Uterus (tissue), 4 donors: ENCODE measurements at regions of chr20 and their contacts with region 1.

Region 1: GRCh38 chr20:62500237-62500864 is 24.6 kb upstream of the GATA5 start:
- DNase-seq: peak; percentile 72 to 78
- H3K4me3 ChIP-seq: no peak overlapping the region
- H3K27ac ChIP-seq: no peak overlapping the region
- H3K4me1 ChIP-seq: no peaks in the 10 kb centered on the region
- H3K27me3 ChIP-seq: no peaks in the 10 kb centered on the region
- CTCF ChIP-seq: peak; percentile 85 to 94 (median 93)
- POLR2A ChIP-seq: no peak

Region 2: GRCh38 chr20:62616728-62617621 is 116.6 kb after region 1 on chr20:
- intact Hi-C with region 1: loop called (anchors 10 kb)
- DNase-seq: peak; percentile 63 to 64
- H3K4me3 ChIP-seq: no peak overlapping the region
- H3K27ac ChIP-seq: peak overlapping the region; percentile 34 to 71
- H3K4me1 ChIP-seq: no peaks in the 10 kb centered on the region
- H3K27me3 ChIP-seq: no peaks in the 10 kb centered on the region
- CTCF ChIP-seq: peak; percentile 92 to 95 (median 94)
- POLR2A ChIP-seq: no peak

Region 3: DNA sequence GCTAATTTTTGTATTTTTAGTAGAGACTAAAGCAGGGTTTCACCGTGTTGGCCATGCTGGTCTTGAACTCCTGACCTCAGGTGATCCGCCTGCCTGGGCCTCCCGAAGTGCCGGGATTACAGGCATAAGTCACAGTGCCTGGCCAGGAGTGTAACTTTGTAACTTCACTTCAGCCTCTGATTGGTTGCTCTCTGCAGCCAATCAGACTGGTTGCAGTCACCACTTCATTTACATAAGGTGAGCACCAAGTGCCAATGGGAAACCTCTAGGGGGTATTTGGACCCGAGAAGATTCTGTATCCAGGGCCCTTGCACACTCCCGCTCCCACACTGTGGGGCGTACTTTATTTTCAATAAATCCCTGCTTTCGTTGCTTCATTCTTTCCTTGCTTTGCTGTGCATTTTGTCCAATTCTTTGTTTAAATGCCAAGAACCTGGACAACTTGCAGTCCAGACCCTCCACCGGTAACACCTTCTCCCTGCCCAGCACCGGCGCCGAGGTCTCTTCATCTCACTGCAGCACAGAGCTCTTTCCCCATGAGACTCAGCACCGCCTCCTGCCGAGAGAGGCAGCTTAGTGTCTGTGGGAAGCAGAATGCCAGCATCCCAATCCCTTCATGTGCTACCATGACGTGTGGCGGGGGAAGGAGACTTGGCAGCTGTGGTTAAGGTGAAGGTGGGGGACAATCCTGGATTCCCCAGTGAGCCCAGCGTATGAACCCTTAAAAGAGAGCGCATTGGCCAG is 282.0 kb after region 1 on chr20:
- intact Hi-C with region 1: loop called (anchors 10 kb)
- DNase-seq: no peak
- H3K4me3 ChIP-seq: no peak overlapping the region
- H3K27ac ChIP-seq: no peak overlapping the region
- H3K4me1 ChIP-seq: no peaks in the 10 kb centered on the region
- H3K27me3 ChIP-seq: no peaks in the 10 kb centered on the region
- CTCF ChIP-seq: no peak
- POLR2A ChIP-seq: no peak